ENCODE measurements at regions of chr6 and their contacts with region 1.

Region 1: DNA sequence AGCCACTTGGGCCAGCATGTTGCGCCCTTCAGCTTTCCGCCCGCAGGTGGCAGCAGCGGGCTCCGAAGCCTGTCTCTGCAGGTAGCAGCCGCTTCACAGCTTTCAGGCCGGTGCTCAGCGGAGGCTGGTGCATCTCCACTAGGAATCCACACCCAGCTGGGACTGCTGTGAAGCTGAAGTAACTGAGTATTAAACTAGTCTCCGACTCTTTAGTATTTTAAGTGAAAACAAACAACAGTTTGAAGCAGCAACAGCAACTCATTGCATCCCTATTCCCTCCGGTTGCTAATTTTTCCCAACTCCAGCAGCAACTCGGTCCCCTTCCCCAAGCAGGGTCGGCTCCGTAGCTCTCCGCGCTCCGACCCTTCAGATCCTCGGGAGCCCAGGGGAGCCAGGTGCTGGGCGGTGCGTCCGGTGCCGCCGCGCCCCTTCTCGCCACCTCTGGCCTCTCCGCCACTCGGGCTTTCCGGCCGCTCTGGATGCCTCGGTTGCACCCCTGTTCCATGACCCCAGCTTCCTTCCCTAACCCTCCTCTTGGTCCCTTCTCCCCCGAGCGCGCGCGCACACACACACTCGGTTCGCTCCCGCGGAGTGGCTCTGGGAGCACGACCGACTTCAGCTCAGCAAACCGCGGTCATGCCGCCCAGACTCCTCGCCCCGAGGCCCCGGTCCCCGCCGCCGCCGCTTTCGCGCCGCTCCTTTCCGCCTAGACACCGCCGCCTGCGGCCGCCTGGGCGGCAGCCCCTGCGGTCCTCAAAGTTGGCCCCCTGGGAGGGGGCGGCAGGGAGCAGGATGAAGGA is 768 bp upstream of the NKAIN2 start:
- DNase-seq: peak; percentile 90

Region 2: DNA sequence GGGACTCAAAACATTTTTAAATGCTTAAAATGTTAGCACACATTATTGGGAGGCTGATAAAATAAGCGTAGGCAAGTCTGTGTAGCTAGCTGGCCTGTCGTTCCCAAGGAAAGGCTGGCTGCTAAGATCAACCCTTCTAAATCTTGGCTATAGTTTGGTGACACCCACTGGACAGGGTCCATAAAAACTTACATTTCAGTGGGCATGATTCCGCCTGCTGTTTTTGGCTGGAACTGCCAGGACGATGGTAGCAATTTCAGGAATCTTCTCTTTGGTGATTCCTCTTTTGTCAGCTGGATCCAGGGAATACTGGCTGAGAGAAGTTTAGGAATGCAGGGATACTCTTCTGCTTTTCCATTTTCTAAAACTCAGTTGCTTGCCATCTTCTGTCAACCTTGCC is 163.0 kb after region 1 on chr6:
- intact Hi-C with region 1: loop called (anchors 5 kb)
- DNase-seq: no peak

Region 3: GRCh38 chr6:124795643-124796463 is 993.0 kb after region 1 on chr6:
- intact Hi-C with region 1: loop called (anchors 5 kb)
- DNase-seq: no peak

Measured in cardiac septum (tissue), 1 donor.